Activated CD4-positive, alpha-beta T cell treated with anti-CD3 and anti-CD28 coated beads, Interleukin-2, amount 10 ng/mL, durations not matched to agents 24 days and 14 days (primary cell): ENCODE measurements at regions of chr6 and their contacts with region 1.

Region 1: DNA sequence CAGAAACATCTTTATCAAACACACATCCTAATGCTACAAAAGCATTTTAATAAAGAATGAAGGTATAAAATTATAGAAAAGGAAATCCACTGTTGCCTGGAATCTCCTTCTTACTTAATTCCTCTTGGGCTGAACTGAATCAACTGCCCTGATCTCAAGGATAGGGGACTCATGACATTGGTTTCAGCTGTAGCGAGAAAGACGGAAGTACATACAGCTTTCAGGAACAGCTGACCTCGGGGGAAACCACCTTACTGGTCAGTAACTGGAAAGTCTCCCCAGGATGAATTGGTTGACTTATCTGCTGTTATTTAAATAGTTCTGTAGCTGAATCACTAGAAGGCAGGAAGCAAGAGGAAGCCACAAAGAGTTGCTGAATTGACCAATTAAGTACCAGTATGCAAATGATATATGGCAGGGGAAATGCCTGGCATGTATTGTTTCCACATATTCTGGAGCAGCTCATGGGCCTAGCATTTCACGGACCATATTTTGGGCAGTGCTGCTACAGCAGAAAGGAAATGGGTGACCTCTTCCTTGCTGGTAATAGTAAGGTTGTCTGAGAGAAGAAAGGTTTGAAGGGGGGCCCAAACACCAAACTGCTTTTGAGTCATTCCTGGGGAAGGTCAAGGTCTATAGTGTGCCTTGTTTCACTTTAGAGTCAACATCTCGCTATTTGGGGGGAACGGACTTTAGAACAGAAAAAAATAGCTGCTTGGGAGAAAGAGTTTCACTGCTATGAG is 43.7 kb upstream of the MAP7 start:
- DNase-seq: peak; percentile 83
- H3K4me3 Mint-ChIP-seq: peak overlapping the region; percentile 73
- H3K27ac Mint-ChIP-seq: peak overlapping the region; percentile 96
- H3K4me1 Mint-ChIP-seq: peaks cover 35% of the 10 kb centered on the region
- H3K27me3 Mint-ChIP-seq: no peaks in the 10 kb centered on the region

Region 2: DNA sequence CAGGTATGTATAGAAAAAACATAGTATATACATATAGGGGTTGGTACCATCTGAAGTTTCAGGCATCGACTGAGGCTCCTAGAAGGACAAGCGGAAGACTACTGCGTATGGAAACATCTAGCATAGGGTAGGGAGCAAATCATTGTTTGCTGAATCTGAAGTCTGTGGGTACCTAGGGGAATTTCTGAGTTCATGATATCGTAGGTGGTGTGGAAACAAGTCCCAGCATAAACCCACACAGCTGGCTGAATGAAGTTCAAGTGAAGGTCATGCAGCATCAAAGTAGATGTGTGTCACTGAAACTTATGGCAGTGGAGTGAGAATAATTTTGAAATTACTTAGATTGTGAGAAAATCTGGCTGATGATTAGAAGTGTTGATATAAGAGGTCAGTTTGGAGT is 83.1 kb before region 1 on chr6:
- intact Hi-C with region 1: loop called (anchors 1 kb)
- DNase-seq: no peak
- H3K4me3 Mint-ChIP-seq: peak overlapping the region; percentile 11
- H3K27ac Mint-ChIP-seq: peak overlapping the region; percentile 13
- H3K4me1 Mint-ChIP-seq: peaks cover 17% of the 10 kb centered on the region
- H3K27me3 Mint-ChIP-seq: peaks cover 7% of the 10 kb centered on the region

Region 3: GRCh38 chr6:136607932-136608772 is 14.2 kb after region 1 on chr6:
- intact Hi-C with region 1: loop called (anchors 2 kb)
- DNase-seq: peak; percentile 94
- H3K4me3 Mint-ChIP-seq: no peak overlapping the region
- H3K27ac Mint-ChIP-seq: no peak overlapping the region
- H3K4me1 Mint-ChIP-seq: peaks cover 15% of the 10 kb centered on the region
- H3K27me3 Mint-ChIP-seq: no peaks in the 10 kb centered on the region

Region 4: GRCh38 chr6:136795996-136796395 is 202.1 kb after region 1 on chr6:
- intact Hi-C with region 1: no loop called
- DNase-seq: no peak
- H3K4me3 Mint-ChIP-seq: no peak overlapping the region
- H3K27ac Mint-ChIP-seq: no peak overlapping the region
- H3K4me1 Mint-ChIP-seq: peaks cover 6% of the 10 kb centered on the region
- H3K27me3 Mint-ChIP-seq: peaks cover 13% of the 10 kb centered on the region